Ascending aorta (tissue), 2 donors: ENCODE measurements at regions of chr9 and their contacts with region 1.

Region 1: GRCh38 chr9:114385412-114386181 is 2.2 kb downstream of the AKNA start:
- DNase-seq: peak; percentile 86 to 94
- H3K4me3 ChIP-seq: peak overlapping the region; percentile 76 to 77
- H3K27ac ChIP-seq: peak overlapping the region; percentile 86 to 96
- H3K4me1 ChIP-seq: peaks cover 36 to 69% of the 10 kb centered on the region in 2 donors
- H3K27me3 ChIP-seq: no peaks in the 10 kb centered on the region
- CTCF ChIP-seq: no peak

Region 2: DNA sequence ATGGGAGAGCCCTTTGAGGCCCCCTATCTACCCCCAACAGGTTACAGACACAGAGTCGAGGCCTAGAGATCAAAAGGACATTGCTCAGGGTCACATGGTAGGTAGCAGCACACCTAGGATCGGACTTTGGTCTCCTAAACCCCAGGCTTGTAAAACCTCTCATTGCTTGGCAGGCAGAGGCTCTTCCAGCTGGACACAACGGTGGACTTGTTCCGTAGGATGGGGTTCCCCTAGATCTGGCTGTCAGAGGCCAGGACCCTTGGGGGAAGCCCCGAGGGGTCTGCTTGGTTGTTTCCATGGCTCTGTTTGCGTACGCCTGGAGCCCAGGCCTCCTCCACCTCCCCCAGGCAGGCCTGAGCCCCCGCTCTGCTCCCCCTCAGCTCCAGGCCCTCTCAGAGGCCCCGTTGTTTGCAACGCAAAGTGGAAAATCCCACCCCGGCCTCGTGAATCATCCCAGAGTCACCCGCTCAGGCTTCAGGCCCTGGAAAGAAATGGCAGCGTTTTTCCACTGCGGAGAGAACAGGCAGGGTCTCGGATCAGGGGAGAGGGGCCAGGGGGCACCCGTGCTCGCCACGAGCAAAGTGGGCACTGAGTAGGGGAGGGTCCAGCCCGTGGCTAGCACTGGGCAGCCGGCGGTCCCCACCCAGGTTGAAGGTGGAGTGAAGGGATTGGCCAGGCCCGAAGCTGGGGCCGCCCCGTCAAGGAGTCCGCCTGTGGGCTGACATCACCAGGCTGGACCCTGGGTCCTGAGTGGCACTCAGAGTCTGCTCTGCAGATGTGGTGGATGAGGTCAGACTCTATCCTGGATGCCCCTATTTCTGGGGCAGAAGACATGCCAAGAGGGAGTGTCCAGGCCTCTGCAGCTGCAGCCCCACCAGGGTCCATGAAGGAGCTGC is 210.5 kb before region 1 on chr9:
- intact Hi-C with region 1: loop called (anchors 10 kb)
- DNase-seq: peak in 1 of 2 donors; percentile 85
- H3K4me3 ChIP-seq: peak overlapping the region in 1 of 2 donors; percentile 9
- H3K27ac ChIP-seq: peak overlapping the region; percentile 77 to 91
- H3K4me1 ChIP-seq: peaks cover 14 to 72% of the 10 kb centered on the region in 2 donors
- H3K27me3 ChIP-seq: no peaks in the 10 kb centered on the region
- CTCF ChIP-seq: no peak

Region 3: GRCh38 chr9:114246558-114246957 is 139.0 kb before region 1 on chr9:
- intact Hi-C with region 1: loop called (anchors 10 kb)
- DNase-seq: no peak
- H3K4me3 ChIP-seq: no peak overlapping the region
- H3K27ac ChIP-seq: no peak overlapping the region
- H3K4me1 ChIP-seq: peaks cover 0 to 8% of the 10 kb centered on the region in 2 donors
- H3K27me3 ChIP-seq: no peaks in the 10 kb centered on the region
- CTCF ChIP-seq: no peak

Region 4: GRCh38 chr9:114348906-114349482 is 36.6 kb before region 1 on chr9:
- intact Hi-C with region 1: loop called (anchors 1 kb)
- DNase-seq: peak; percentile 89 to 93
- H3K4me3 ChIP-seq: no peak overlapping the region
- H3K27ac ChIP-seq: peak overlapping the region; percentile 70 to 77
- H3K4me1 ChIP-seq: peaks cover 0 to 21% of the 10 kb centered on the region in 2 donors
- H3K27me3 ChIP-seq: no peaks in the 10 kb centered on the region
- CTCF ChIP-seq: no peak